ENCODE measurements at regions of chr2 and their contacts with region 1.

Region 1: GRCh38 chr2:9813312-9814133 is 29.8 kb upstream of the TAF1B start:
- DNase-seq: no peak
- H3K4me3 ChIP-seq: no peak overlapping the region
- H3K27me3 ChIP-seq: no peaks in the 10 kb centered on the region
- CTCF ChIP-seq: peak; percentile 97

Region 2: DNA sequence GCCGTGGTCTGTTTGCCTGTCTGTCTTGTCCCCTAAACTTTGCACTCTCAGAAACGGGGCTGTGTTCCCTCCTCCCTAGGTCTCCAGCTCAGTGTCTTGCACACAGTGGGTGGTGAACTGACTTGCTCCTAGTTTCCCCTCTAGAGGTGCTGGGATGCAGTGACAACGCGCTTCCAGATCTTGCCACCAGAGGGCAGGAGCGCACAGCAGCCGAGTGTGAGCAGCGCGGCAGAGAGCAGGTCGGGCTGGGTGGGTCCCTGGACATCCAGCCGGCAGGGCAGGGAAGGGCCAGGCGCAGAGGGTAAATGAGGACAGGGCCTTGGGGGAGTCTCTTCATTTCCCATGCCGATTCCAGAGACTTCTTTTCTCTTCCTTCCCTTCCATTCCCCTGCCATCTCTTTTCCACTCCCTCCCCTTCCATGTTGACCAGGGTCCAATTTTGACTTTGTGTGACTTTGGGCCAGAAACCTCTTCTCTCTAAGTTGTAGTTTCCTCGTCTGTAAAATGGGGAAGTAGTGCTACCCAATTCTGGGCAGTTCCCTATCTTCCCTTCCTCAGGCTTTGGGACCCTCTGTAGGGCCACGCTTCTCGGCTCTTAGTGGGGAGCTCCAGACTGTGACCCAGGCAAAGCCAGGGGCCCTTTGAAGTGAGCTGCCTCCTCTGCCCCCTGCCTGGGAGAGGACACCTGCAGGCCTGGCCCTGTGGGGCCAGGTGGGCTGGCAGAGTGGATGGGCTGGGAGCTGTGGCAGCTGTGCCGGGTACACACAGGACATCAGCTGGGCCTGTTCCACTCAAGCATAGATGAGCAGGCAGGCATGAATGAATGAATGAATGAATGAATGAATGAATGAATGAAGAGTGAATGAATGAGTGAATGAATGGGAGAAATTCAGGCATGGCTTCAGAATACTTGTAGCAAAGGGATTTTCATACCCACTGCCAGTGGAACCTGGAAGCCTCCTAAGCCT is 13.6 kb before region 1 on chr2:
- CTCF ChIA-PET with region 1: interaction called, 51 read pairs
- POLR2A ChIA-PET with region 1: no interaction called
- DNase-seq: no peak
- H3K4me3 ChIP-seq: no peak overlapping the region
- H3K27me3 ChIP-seq: peaks cover 1% of the 10 kb centered on the region; the same call in 1 of the 2 replicates
- CTCF ChIP-seq: peak; percentile 99

Region 3: DNA sequence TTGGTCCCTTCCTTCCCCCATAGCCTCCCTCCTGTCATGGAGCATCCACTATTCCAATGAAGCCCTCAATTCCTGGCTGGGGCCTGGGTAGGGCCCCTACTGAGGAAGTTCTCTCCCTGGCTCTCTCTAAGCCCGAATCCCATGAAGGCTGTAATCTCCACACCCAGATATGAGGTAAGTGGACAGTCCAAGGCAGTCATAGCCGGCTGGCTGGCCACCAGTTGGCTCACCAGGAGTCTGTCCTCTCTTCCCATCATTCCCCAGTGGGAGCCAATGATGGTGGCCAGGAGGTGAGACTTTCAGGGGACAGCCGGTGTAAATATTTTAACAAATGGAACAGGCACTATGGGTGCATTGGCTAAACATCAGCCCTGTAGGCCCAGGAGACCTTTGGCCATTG is 23.0 kb after region 1 on chr2:
- CTCF ChIA-PET with region 1: interaction called, 47 read pairs
- POLR2A ChIA-PET with region 1: no interaction called
- DNase-seq: no peak
- H3K4me3 ChIP-seq: no peak overlapping the region
- H3K27me3 ChIP-seq: no peaks in the 10 kb centered on the region
- CTCF ChIP-seq: no peak

Region 4: DNA sequence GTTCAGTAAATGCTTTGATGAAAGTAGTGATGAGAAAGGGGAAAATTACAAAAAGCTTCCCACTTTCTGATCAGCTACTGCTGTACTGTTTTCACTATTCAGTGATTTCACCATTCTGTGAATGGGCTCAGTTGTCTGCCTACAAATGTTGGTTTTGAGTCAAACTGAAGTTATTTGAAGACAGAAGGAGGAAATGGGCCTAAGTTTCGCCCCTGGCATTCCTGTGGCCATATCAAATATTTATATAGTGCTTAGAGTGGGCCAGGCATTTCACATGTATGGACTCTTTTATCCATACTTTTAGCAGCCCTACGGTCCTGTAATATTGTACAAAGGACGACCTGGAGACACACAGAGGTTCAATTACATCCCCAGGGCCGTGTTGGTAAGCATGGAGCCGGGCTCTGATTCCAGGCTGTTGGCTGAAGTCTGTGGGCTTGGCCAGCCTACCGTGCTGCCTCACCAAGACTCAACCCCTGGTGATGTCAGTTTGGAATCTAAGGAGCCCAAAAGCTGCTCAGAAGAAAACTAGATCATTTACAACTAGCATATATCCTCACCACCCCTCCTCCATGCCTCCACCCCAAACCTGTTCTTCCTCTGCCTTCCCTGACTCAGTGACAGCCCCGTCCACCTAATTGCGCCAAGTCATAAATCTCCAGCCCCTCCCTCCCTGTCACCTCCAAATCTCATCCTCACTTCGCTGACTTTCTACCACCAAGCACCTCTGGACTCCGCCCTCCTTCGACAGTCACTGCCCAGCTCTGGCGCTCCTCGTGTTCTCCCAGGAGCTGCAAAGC is 127.9 kb after region 1 on chr2:
- CTCF ChIA-PET with region 1: interaction called, 11 read pairs
- POLR2A ChIA-PET with region 1: no interaction called
- DNase-seq: peak; percentile 44
- H3K4me3 ChIP-seq: no peak overlapping the region
- H3K27me3 ChIP-seq: peaks cover 2% of the 10 kb centered on the region; the same call in 1 of the 2 replicates
- CTCF ChIP-seq: no peak

Region 5: DNA sequence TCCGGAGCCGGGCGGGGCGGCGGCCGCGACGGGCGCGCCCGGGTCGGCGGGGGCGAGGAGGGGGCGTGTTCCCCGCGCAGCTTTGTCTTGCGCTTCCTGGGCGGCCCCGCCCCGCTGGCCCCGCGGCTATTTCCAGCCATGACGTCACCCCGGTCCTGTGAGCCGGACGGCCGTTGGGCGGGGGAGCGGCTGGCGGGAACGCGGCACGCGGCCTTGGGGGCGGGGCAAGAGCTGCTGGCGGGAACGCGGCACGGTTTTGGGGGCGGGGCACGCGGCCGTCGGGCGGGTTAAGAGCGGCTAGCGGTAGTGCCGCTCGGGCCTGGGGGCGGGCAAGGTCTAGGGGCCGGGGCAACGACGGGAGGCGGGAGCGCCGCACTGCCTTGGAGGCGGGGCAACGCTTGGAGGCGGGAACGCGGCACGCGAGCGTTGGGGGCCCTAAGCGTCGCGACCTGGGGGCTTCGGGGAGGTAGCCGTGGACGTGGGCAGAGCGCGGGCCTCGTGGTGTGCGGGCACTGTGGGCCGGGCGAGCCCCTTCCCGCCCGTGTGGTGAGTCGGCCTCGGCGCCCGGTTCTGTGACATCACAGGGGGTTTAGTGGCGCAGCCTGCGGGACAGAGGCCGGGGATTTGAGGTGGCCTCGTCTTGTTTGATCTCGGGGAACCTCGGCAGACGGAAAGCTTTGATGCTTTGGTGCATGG is 230.5 kb after region 1 on chr2:
- CTCF ChIA-PET with region 1: interaction called, 83 read pairs
- POLR2A ChIA-PET with region 1: no interaction called
- DNase-seq: peak; percentile 63
- H3K4me3 ChIP-seq: peak overlapping the region; percentile 79
- H3K27me3 ChIP-seq: no peaks in the 10 kb centered on the region
- CTCF ChIP-seq: no peak